Heart left ventricle (tissue), 16 donors: ENCODE measurements at regions of chr1 and their contacts with region 1.

Region 1: DNA sequence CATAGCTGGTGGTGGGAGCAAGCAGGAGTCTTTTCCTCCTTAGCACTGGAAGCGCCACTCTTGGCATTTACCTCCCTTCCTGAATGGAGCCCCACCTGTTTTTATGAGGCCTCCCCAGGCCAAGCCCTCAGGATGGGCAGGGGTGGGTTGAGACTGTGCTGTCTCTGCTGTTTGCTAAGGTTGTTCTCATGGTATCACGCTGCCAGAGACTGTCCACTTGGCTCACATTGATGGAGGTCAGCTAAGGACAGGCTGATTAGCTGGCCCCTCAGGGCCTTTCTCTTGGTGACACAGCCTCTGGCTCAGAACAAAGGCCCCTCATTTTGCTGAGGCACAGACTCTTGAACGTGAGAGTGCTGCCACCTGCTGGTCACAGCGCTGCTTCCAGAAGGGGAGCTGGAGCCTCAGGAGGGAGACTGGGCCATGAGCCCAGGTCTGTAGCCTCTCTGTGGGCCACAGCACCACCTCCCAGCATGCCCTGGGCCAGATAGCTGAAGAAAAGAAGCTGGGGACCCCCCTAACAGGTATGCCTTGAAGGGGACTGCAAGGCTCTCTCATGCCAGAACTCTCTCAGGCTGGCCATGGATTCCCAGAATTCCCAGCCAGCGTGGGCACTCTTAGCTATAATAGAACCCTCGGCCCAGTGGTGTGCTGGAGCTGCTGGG is 85.6 kb downstream of the CD58 start:
- DNase-seq: peak; percentile 86 to 93 (median 92)
- ATAC-seq: peak; percentile 50 to 91 (median 82)
- H3K4me3 ChIP-seq: no peak overlapping the region
- H3K27ac ChIP-seq: peak overlapping the region in 3 of 12 donors; percentile 11 to 63 (median 29)
- H3K4me1 ChIP-seq: peaks cover 4 to 36% (median 22%) of the 10 kb centered on the region in 12 donors
- H3K27me3 ChIP-seq: no peaks in the 10 kb centered on the region
- CTCF ChIP-seq: peak; percentile 84 to 97 (median 92)
- POLR2A ChIP-seq: no peak

Region 2: DNA sequence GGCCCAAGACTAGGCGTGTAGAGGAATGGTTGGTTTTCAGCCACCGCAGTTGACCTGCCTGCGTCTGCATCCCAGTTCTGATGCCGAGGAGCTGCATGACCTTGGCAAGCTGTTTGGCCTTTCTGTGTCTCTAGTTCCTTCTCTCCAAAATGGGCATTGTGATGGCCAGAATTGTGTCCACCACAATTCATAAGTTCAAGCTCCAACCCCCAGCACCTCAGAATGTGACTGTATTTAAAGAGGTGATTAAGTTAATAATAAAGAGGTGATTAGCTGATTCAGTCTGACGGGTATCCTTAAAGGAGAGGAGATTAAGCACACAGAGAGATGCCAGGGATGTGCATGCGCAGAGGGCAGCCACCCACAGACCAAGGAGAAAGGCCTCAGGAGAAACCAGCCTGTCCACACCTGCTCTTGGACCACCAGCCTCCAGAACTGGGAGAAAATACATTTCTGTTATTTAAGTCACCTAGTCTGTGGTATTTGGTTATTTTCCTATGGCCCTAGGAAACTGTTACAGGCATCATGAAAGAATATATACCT is 345.5 kb before region 1 on chr1:
- intact Hi-C with region 1: loop called in 6 of 10 experiments (anchors 1 to 5 kb)
- DNase-seq: no peak
- ATAC-seq: no peak
- H3K4me3 ChIP-seq: no peak overlapping the region
- H3K27ac ChIP-seq: no peak overlapping the region
- H3K4me1 ChIP-seq: peaks cover 0 to 7% (median 0%) of the 10 kb centered on the region in 12 donors
- H3K27me3 ChIP-seq: no peaks in the 10 kb centered on the region
- CTCF ChIP-seq: no peak
- POLR2A ChIP-seq: no peak

Region 3: GRCh38 chr1:116232989-116233514 is 252.2 kb before region 1 on chr1:
- intact Hi-C with region 1: loop called in 2 of 10 experiments (anchors 10 kb)
- DNase-seq: no peak
- ATAC-seq: peak in 2 of 4 donors; percentile 46 to 60
- H3K4me3 ChIP-seq: no peak overlapping the region
- H3K27ac ChIP-seq: no peak overlapping the region
- H3K4me1 ChIP-seq: no peaks in the 10 kb centered on the region
- H3K27me3 ChIP-seq: no peaks in the 10 kb centered on the region
- CTCF ChIP-seq: peak in 4 of 12 donors; percentile 7 to 21 (median 11)
- POLR2A ChIP-seq: no peak

Region 4: DNA sequence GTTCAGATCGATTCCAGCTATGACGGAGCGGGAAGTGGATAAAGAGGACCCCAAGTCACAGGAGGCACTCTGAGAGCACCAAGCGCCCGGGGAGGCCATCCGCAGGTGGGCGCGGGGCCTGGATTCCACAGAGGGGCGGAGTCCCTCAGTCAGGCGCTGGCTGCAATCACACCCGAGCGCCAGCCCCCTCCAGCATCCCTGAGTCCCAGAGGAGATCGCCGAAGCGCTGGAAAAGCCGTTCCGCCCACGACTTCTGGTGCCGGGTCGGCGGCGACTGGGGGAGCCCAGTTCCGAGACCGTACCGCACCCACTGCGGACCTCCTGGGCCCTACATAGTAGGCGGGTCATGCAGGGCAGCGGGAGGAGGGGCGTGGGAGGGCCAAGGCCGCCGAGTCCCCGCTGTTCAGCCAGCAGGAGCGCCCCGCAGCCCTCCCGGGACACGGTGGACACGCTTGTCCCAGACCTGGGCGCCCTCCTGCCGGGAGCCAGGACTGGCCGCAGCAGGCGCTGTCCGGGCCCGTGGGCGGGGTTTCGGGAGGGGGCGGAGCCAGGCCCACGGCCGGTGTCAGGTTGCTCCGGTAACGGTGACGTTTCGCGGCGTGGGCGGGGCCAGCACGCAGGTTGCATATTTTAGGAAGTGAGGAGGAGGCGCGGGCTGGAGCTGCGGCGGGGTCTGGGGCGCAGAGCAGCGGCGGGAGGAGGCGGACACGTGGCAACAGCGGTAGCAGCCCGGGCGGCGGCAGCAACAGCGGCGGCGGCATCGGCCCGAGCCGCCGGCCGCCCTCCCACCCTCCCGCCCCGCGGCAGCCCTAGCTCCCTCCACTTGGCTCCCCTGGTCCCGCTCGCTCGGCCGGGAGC is 112.4 kb before region 1 on chr1 and contains the start of gene ATP1A1:
- intact Hi-C with region 1: loop called in 4 of 10 experiments (anchors 5 kb)
- DNase-seq: peak; percentile 97 to 99 (median 98)
- ATAC-seq: peak; percentile 76 to 89 (median 83)
- H3K4me3 ChIP-seq: peak within 1 kb of the TSS; percentile 73 to 95 (median 88)
- H3K27ac ChIP-seq: peak within 1 kb of the TSS; percentile 89 to 99 (median 97)
- H3K4me1 ChIP-seq: peaks cover 0 to 49% (median 40%) of the 10 kb centered on the region in 12 donors
- H3K27me3 ChIP-seq: no peaks in the 10 kb centered on the region
- CTCF ChIP-seq: peak in 3 of 12 donors; percentile 9 to 38 (median 36)
- POLR2A ChIP-seq: peak; percentile 99 to 100
- total RNA-seq, gene ATP1A1: 175 to 436 (median 241) TPM

Region 5: GRCh38 chr1:116418091-116418830 is 66.9 kb before region 1 on chr1:
- intact Hi-C with region 1: loop called in 1 of 10 experiments (anchors 5 kb)
- DNase-seq: peak; percentile 85 to 93 (median 88)
- ATAC-seq: peak; percentile 24 to 79 (median 72)
- H3K4me3 ChIP-seq: peak overlapping the region; percentile 65 to 88 (median 78)
- H3K27ac ChIP-seq: peak overlapping the region; percentile 63 to 95 (median 84)
- H3K4me1 ChIP-seq: peaks cover 4 to 44% (median 22%) of the 10 kb centered on the region in 12 donors
- H3K27me3 ChIP-seq: no peaks in the 10 kb centered on the region
- CTCF ChIP-seq: peak in 1 of 12 donors; percentile 32
- POLR2A ChIP-seq: peak in 1 of 2 donors; percentile 51